ENCODE measurements at regions of chr7 and their contacts with region 1.

Region 1: DNA sequence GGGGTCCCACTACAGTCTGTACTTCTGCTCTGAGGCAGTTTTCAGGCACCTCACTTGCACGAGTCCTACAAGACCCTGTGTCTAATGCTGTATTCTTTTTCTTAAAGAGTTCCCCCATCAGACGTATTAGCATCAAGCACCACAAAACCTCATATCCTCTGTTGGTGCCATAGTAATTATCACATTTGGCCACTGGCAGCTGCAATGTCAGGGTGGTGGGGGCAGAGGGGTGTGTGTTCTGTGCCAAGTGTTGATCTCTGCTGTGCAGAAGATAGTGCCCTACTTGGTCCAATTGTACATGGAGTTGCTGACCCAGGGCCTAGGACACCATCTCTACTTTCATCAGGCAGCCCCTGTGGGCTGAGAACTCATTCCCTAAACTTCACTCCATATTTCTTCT is 20.0 kb upstream of the JAZF1 start:
- DNase-seq: peak; percentile 47 to 57
- ATAC-seq: peak; percentile 64 to 81 (median 79)
- H3K4me3 ChIP-seq: no peak overlapping the region
- H3K4me3 Mint-ChIP-seq: peak overlapping the region; percentile 75
- H3K27ac ChIP-seq: peak overlapping the region; percentile 61
- H3K27ac Mint-ChIP-seq: peak overlapping the region; percentile 88 to 96
- H3K4me1 ChIP-seq: peaks cover 54% of the 10 kb centered on the region
- H3K4me1 Mint-ChIP-seq: peaks cover 73 to 92% of the 10 kb centered on the region in 2 donors
- H3K27me3 ChIP-seq: no peaks in the 10 kb centered on the region
- H3K27me3 Mint-ChIP-seq: no peaks in the 10 kb centered on the region
- CTCF ChIP-seq: no peak

Region 2: DNA sequence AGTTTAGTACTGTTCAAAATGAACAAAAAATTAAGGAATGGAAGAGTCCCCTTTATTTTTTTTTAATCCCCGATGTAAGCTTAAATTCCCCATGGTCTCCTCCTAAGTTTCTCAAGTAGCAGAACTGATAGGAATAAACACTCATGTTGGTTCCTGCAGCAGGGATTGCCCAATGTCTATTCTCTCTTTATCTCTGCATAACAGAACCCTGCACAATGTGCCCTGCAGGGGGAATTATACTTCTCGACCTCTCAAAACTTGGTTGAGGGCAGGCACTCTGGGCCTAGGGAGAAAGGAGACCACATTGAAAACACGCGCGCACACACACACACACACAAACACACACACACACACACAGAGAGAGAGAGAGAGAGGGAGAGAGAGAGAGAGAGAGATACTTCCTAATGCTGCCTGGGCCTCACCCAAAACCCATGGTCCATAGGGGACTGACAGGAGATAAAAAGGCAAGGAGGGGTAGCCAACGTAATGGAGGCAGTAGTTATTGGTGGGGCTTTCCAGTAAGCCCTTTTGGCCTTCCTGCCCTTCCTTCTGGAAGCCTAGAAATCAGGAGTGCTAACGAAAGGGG is 42.7 kb before region 1 on chr7:
- intact Hi-C with region 1: no loop called
- DNase-seq: no peak
- ATAC-seq: no peak
- H3K4me3 ChIP-seq: no peak overlapping the region
- H3K4me3 Mint-ChIP-seq: no peak overlapping the region
- H3K27ac ChIP-seq: no peak overlapping the region
- H3K27ac Mint-ChIP-seq: peak overlapping the region in 1 of 2 donors; percentile 93
- H3K4me1 ChIP-seq: peaks cover 31% of the 10 kb centered on the region
- H3K4me1 Mint-ChIP-seq: peaks cover 85 to 89% of the 10 kb centered on the region in 2 donors
- H3K27me3 ChIP-seq: no peaks in the 10 kb centered on the region
- H3K27me3 Mint-ChIP-seq: no peaks in the 10 kb centered on the region
- CTCF ChIP-seq: no peak

Region 3: GRCh38 chr7:28179120-28180030 is 21.2 kb before region 1 on chr7:
- intact Hi-C with region 1: loop called (anchors 2 kb)
- DNase-seq: peak; percentile 75 to 81
- ATAC-seq: peak; percentile 55 to 83 (median 71)
- H3K4me3 ChIP-seq: peak overlapping the region; percentile 27
- H3K4me3 Mint-ChIP-seq: peak overlapping the region; percentile 86
- H3K27ac ChIP-seq: peak overlapping the region; percentile 59
- H3K27ac Mint-ChIP-seq: peak overlapping the region; percentile 85 to 98
- H3K4me1 ChIP-seq: peaks cover 23% of the 10 kb centered on the region
- H3K4me1 Mint-ChIP-seq: peaks cover 61 to 68% of the 10 kb centered on the region in 2 donors
- H3K27me3 ChIP-seq: no peaks in the 10 kb centered on the region
- H3K27me3 Mint-ChIP-seq: no peaks in the 10 kb centered on the region
- CTCF ChIP-seq: no peak

Region 4: DNA sequence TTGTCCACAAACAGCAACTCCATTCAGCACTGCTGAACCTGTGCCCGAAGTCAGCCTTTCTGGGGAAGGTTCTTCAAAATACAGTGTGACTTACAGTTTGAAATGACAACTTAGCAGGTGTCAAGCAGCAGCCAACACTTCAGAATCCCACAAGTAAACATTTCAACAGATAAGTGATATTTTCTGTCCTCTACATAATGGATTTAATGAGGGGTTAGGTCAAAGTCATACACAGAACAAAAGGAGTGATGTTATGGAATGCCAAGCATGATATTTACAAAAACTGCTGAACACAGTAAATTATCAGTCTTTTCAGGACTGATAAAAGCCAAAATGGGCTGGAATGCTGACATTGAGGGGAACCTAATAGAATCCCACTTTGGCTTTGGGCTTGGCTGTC is 57.6 kb after region 1 on chr7:
- intact Hi-C with region 1: no loop called
- DNase-seq: no peak
- ATAC-seq: peak; percentile 31 to 70 (median 48)
- H3K4me3 ChIP-seq: no peak overlapping the region
- H3K4me3 Mint-ChIP-seq: no peak overlapping the region
- H3K27ac ChIP-seq: no peak overlapping the region
- H3K27ac Mint-ChIP-seq: no peak overlapping the region
- H3K4me1 ChIP-seq: peaks cover 1% of the 10 kb centered on the region
- H3K4me1 Mint-ChIP-seq: peaks cover 6 to 17% of the 10 kb centered on the region in 2 donors
- H3K27me3 ChIP-seq: peaks cover 2% of the 10 kb centered on the region
- H3K27me3 Mint-ChIP-seq: peaks cover 9 to 13% of the 10 kb centered on the region in 2 donors
- CTCF ChIP-seq: no peak

Measured in natural killer cell (primary cell).